Left colon (tissue), 2 donors: ENCODE measurements at regions of chr5 and their contacts with region 1.

Region 1: GRCh38 chr5:147453875-147454814 is 55.7 kb downstream of the DPYSL3 start:
- DNase-seq: peak; percentile 75 to 90
- ATAC-seq: peak; percentile 94

Region 2: GRCh38 chr5:146840691-146841090 is 613.5 kb before region 1 on chr5:
- intact Hi-C with region 1: no loop called
- DNase-seq: no peak
- ATAC-seq: no peak

Region 3: DNA sequence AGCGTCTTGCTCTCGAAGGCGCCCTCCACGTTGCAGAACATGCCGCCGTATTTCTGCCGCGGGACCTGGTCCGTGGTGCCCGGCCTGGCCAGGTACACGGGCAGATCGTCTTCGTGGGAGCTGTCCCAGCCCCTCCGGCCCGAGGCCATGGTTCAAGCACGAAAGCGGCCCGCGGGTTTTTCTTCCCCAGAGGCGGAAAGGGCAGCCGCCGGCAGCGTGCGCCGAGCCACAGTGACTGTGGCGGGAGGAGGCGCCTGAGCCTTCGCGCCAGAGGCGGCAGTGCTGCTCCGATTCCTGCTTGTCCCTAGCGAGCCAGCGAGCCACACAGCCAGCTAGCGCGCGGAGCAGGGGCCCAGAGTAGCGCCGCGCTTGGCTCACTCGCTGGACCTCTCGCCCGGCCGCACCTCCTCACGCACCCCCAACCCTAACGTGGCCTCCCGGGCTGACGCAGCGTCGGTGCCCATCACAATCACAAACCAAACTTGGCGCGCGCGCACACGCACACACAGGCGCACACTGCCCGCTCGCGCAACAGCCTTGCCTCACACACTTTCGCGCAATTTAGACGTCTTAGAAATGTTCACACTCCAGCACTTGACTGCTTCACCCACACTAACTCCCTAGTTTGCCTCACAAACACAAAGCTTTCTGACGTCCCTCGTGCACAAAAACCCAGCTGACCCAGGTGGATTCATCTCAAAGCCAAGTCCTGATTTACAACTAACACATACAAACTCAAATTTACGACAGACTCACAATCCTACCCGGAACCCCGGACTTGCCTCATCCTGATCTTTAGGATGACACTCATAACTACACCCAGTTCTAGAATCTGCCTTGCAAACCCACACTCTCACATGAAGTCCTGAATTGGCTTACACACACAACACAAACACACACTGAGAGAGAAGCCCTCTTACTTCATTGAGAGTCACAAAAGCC is 55.8 kb after region 1 on chr5 and contains the start of gene DPYSL3:
- intact Hi-C with region 1: loop called in 1 of 2 experiments (anchors 10 kb)
- DNase-seq: peak; percentile 52 to 56
- ATAC-seq: peak; percentile 74
- total RNA-seq, gene DPYSL3: 10.0 to 23.9 TPM